ENCODE measurements at regions of chr11 and their contacts with region 1.

Region 1: GRCh38 chr11:75802913-75803820 is 11.8 kb upstream of the UVRAG start:
- DNase-seq: peak; percentile 85
- H3K4me3 Mint-ChIP-seq: no peak overlapping the region
- H3K27ac Mint-ChIP-seq: no peak overlapping the region
- H3K4me1 Mint-ChIP-seq: peaks cover 12% of the 10 kb centered on the region
- H3K27me3 Mint-ChIP-seq: no peaks in the 10 kb centered on the region

Region 2: DNA sequence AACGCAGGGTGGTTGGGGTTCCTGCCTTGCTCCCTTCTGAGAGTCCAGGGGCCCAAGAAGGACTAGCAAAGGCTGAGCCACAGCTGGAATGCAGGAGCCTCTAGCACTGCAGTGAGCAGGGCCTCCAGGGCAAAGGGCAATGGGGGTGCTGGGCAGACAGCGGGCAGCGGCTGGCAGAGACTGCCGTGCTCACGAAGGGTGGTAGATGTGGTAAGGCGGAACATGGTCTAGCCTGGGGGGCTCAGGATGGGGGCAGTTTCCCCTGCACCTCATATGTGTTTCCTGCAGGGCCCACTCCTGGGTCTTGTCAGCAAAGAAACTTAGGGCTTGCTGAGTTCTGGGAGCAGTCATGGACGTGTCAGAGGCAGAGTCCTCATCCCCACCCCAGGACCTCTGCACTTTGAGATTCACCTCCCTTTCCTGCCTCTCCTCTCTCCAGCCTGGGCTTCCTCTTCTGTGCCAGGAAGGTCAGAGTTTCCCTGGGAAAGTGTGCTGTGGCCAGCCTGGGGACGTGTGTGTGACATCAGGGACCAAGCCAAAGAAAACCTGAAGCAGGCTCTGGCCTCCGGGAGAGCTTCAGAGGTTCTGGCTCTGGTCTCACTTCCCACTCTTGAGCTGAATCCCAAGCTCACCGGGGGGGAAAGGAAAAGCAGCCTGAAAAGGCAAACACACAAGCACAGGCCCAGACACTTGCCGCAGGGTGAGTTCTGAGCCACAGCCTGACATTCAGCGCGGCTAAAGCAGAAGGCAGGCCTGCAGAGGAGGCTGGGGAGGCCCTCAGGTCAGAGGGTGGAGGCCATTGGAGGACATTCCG is 81.1 kb before region 1 on chr11:
- CTCF ChIA-PET with region 1: interaction called, 3 read pairs
- intact Hi-C with region 1: loop called (anchors 2 kb)
- DNase-seq: no peak
- H3K4me3 Mint-ChIP-seq: no peak overlapping the region
- H3K27ac Mint-ChIP-seq: no peak overlapping the region
- H3K4me1 Mint-ChIP-seq: no peaks in the 10 kb centered on the region
- H3K27me3 Mint-ChIP-seq: no peaks in the 10 kb centered on the region

Region 3: GRCh38 chr11:75786101-75786736 is 16.9 kb before region 1 on chr11:
- CTCF ChIA-PET with region 1: interaction called, 12 read pairs
- intact Hi-C with region 1: no loop called
- DNase-seq: no peak
- H3K4me3 Mint-ChIP-seq: no peak overlapping the region
- H3K27ac Mint-ChIP-seq: no peak overlapping the region
- H3K4me1 Mint-ChIP-seq: no peaks in the 10 kb centered on the region
- H3K27me3 Mint-ChIP-seq: no peaks in the 10 kb centered on the region

Region 4: GRCh38 chr11:75850787-75851186 is 47.6 kb after region 1 on chr11:
- CTCF ChIA-PET with region 1: no interaction called
- intact Hi-C with region 1: no loop called
- DNase-seq: no peak
- H3K4me3 Mint-ChIP-seq: no peak overlapping the region
- H3K27ac Mint-ChIP-seq: no peak overlapping the region
- H3K4me1 Mint-ChIP-seq: peaks cover 10% of the 10 kb centered on the region
- H3K27me3 Mint-ChIP-seq: no peaks in the 10 kb centered on the region

Region 5: DNA sequence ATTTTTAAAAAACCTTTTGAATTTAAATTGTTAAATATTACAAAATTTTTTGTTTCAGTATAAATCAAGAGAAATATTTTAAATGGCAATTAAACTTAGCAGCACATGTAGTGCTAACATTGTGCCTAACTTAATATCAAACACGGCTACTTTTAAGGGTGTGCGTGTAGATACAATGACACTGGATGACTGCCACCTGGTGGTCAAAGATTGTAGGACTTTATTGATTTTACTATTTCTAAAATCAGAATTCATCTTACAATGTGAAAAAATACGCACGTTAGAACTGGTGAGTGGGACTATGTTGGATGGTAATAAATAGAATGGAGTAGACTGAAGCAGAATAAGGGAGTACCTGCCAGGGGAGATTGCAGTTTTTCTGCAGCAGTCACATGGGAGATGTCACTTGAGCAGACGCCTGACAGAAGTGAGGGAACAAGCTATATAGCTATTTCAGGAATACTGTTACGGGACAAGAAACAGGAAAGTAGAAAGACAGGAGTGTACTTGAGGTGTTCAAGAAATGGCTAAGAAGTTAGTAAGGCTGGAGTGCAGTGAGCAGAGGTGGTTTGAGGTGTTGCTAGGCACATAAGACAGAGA is 64.7 kb after region 1 on chr11:
- CTCF ChIA-PET with region 1: interaction called, 66 read pairs
- intact Hi-C with region 1: loop called (anchors 1 kb)
- DNase-seq: peak; percentile 61
- H3K4me3 Mint-ChIP-seq: no peak overlapping the region
- H3K27ac Mint-ChIP-seq: no peak overlapping the region
- H3K4me1 Mint-ChIP-seq: peaks cover 8% of the 10 kb centered on the region
- H3K27me3 Mint-ChIP-seq: no peaks in the 10 kb centered on the region